Posterior vena cava (tissue), 2 donors: ENCODE measurements at regions of chr1 and their contacts with region 1.

Region 1: GRCh38 chr1:31888291-31888690 is 49.9 kb downstream of the PTP4A2 start:
- DNase-seq: no peak

Region 2: DNA sequence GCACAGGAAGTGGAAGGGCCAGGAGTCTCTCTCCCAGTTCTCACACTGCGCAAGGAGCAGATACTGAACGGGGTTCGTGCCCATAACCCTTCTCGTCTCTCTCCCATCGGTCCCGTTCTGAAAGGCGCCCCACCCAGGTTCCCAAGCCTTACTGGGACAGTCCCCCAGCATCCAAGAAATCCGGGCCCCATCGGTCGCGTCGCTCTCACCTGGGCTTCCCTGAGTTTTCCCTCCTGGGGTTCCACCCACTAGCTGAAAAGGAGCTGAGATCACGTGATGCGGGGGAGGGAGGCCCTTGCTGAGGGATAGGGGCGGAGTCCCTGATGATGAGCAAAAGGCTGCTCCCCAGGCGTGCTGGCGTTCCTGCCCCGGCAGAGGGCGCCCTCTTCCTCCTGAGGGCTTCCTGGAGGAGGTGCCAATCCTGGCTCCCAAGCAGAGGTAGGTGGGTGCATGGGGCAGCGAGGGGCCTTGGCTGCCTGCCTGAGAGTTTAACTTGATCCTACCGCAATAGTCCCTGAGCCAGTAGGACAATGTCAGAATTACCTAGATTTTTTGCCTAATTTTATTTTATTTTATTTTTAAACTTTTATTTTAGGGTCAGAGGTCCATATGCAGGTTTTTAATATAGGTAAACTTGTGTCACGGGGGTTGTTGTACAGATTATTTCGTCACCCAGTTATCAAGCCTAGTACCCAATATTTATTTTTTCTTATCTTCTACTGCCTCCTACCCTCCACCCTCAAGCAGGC is 72.4 kb before region 1 on chr1 and contains the start of gene SPOCD1:
- intact Hi-C with region 1: loop called in 1 of 2 experiments (anchors 2 kb)
- DNase-seq: peak; percentile 92
- total RNA-seq, gene SPOCD1: 13.5 to 23.0 TPM

Region 3: GRCh38 chr1:31855038-31855845 is 33.0 kb before region 1 on chr1:
- intact Hi-C with region 1: no loop called
- DNase-seq: no peak